Left cardiac atrium (tissue), 4 donors: ENCODE measurements at regions of chr1 and their contacts with region 1.

Region 1: GRCh38 chr1:201792534-201793305 is 36.2 kb upstream of the IPO9 start:
- DNase-seq: peak; percentile 72
- ATAC-seq: peak; percentile 83 to 85

Region 2: GRCh38 chr1:201559679-201560162 is 233.0 kb before region 1 on chr1:
- intact Hi-C with region 1: loop called (anchors 2 to 5 kb)
- DNase-seq: peak; percentile 81
- ATAC-seq: peak; percentile 83 to 90

Region 3: GRCh38 chr1:201709564-201710295 is 83.0 kb before region 1 on chr1:
- intact Hi-C with region 1: loop called (anchors 1 to 2 kb)
- DNase-seq: peak; percentile 76
- ATAC-seq: peak; percentile 62 to 64